Lower leg skin (tissue), 4 donors: ENCODE measurements at regions of chr1 and their contacts with region 1.

Region 1: GRCh38 chr1:226827968-226828513 is 42.4 kb upstream of the PSEN2 start:
- DNase-seq: peak; percentile 94 to 99
- H3K4me3 ChIP-seq: no peak overlapping the region
- CTCF ChIP-seq: peak in 1 of 3 donors; percentile 95
- POLR2A ChIP-seq: no peak

Region 2: GRCh38 chr1:226624526-226624925 is 203.5 kb before region 1 on chr1:
- intact Hi-C with region 1: loop called (anchors 5 kb)
- DNase-seq: peak in 1 of 2 donors; percentile 84
- H3K4me3 ChIP-seq: no peak overlapping the region
- CTCF ChIP-seq: no peak
- POLR2A ChIP-seq: no peak

Region 3: DNA sequence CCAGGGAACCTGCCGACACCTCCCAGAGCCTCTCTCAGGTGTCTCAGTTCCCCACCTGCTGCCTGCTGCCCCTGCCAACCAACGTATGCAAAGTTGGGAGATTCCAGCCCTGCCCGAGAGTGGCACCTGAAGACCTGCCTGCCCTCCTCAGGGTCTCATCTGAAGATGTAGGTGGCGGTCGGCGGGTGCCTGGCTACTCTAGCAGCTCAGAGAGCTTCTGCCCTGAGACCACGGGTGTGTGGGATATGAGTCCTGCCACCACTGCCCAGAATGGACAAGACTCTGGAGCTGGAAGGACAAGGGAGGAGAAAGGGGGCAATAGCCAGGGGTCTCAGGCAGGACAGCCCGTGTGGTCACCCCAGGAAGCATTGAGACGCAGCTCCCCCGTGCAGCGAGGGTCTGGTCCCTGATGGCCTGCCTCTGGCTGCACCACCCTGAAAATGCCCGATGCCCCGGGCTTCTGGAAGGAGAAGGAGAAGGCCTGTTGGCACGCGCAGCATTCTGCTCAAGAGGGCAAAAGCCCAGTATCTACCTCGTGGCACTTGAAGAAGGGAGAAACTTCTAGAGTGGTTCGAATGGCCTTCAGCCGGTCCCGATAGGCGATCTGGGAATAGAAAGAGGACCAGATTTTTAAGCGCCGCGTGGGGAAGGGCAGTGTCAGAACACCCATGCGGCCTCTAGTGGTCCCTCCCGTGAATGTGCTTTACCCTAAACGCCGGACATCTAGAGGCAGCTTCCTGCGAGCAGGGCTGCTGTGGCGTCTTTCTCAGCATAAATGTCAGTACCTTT is 190.7 kb before region 1 on chr1:
- intact Hi-C with region 1: loop called (anchors 5 kb)
- DNase-seq: peak in 1 of 2 donors; percentile 91
- H3K4me3 ChIP-seq: no peak overlapping the region
- CTCF ChIP-seq: no peak
- POLR2A ChIP-seq: no peak

Region 4: DNA sequence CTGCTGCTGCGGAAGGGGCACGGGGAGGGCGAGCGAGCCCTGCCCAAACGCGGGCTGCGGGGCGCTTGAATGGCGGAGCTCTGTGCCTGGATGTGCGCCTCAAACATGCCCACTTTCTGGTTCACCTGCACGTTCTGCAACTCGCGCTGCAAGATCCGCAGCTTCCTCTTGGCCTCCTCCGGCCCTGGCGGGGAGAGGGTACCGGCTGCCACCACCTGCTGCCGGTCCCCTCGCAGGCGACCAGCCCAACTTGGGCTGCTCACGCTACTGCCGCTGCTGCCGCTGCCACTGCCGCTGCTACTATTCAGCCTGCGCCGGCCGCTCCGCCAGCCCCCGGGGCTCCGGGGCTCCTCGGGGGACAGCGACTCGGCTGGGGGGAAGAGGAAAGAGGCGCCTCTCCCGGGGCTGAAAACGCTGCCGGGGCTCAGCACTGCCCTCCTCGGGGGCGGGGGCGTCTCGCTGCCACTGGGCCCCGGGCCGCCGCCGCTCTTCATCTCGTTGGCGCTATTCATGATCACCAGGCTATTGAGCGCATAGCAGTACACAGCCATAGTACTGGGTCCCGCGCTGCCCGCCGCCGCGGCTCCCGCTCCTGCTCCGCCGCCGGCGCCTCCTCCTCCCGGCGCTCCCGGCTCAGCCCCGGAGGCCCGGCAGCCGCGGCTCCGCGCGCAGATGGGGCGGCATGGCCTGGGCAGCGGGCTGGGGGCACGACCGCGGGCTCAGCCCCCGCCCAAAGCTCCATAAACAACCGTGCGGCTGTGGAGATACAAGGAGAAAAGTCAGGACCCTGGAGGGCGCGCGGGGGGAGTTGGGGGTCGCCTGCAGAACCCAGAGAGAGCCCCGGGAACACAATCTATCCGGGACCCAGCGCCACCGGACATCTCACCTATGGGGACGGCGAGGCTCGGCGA is 90.9 kb before region 1 on chr1:
- intact Hi-C with region 1: loop called (anchors 10 kb)
- DNase-seq: peak in 1 of 2 donors; percentile 25
- H3K4me3 ChIP-seq: peak overlapping the region; percentile 91
- CTCF ChIP-seq: no peak
- POLR2A ChIP-seq: no peak